ENCODE measurements at regions of chr1 and their contacts with region 1.

Region 1: DNA sequence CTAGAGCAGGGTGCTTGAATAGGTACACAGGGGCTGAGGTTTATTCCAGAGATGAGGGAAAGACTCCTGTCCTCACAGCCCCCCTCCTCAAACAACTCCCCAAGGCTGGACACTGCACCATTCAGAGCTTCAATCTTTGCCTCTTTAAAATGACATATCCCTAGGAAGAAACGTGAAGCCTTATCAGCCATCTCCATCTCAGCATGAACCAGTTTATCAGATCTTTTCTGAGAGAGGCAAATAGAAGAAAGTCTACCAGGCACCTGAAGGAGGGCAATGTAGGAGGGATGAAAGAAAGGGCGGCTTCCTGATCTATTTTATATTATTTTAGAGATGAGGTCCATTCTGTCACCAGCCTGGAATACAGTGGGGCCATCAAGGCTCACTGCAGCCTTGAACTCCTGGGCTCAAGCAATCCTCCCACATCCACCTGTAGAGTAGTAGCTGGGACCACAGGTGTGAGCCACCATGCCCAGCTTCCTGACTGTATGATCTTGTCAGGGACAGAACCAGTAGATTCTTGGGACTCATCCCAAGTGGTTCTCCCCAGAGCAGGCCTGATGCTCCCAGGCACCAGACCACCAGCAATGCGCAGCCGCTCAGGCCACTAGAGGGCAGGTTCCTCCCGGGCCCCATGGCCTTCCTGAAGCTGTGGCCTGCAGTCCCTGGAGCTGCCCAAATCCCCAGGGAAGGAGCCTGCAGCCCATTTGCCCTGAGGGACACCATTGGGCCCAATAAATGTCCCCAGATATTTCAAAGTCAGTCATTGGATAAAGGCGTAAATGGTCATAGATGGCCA is 44.4 kb upstream of the GOLT1A start:
- DNase-seq: peak; percentile 76 to 84
- H3K4me3 ChIP-seq: no peak overlapping the region
- H3K4me3 Mint-ChIP-seq: no peak overlapping the region
- H3K27ac Mint-ChIP-seq: no peak overlapping the region
- H3K4me1 ChIP-seq: peaks cover 8% of the 10 kb centered on the region; the same call in 1 of the 2 replicates
- H3K4me1 Mint-ChIP-seq: no peaks in the 10 kb centered on the region
- H3K27me3 ChIP-seq: no peaks in the 10 kb centered on the region
- H3K27me3 Mint-ChIP-seq: no peaks in the 10 kb centered on the region
- CTCF ChIP-seq: peak; percentile 86 to 92

Region 2: GRCh38 chr1:204274446-204274845 is 16.3 kb after region 1 on chr1:
- CTCF ChIA-PET with region 1: no interaction called
- POLR2A ChIA-PET with region 1: no interaction called
- intact Hi-C with region 1: no loop called
- DNase-seq: no peak
- H3K4me3 ChIP-seq: no peak overlapping the region
- H3K4me3 Mint-ChIP-seq: no peak overlapping the region
- H3K27ac Mint-ChIP-seq: no peak overlapping the region
- H3K4me1 ChIP-seq: no peaks in the 10 kb centered on the region
- H3K4me1 Mint-ChIP-seq: no peaks in the 10 kb centered on the region
- H3K27me3 ChIP-seq: no peaks in the 10 kb centered on the region
- H3K27me3 Mint-ChIP-seq: no peaks in the 10 kb centered on the region
- CTCF ChIP-seq: no peak

Region 3: DNA sequence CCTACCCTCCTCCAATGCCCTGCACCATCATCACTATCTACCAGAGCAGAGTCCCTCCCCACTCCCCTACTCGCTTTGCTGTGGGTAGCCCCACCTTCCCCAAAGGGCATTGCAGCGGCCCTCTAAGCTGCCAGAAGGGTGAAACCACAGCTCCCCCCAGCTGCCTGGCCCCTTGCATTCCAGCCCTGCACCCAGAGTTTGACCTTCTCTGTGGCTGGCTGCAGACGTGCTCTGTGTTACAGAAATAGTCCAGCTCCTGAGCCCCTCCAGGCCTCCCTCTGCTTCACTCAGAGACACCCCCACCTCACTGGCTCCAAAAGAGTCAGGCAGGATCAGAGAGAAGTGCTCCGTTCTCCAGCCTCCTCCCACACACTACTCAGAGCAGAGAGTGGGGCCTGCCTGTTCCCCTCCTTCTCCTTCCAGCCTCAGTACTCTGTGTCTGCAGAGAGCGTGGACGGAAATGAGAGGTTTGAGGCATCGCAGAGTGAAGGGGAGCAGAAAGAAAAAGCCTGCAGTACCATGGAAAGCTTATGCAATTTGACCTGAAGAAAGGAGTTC is 38.4 kb after region 1 on chr1:
- CTCF ChIA-PET with region 1: no interaction called
- POLR2A ChIA-PET with region 1: no interaction called
- intact Hi-C with region 1: loop called (anchors 1 kb)
- DNase-seq: no peak
- H3K4me3 ChIP-seq: no peak overlapping the region
- H3K4me3 Mint-ChIP-seq: no peak overlapping the region
- H3K27ac Mint-ChIP-seq: no peak overlapping the region
- H3K4me1 ChIP-seq: peaks cover 38% of the 10 kb centered on the region
- H3K4me1 Mint-ChIP-seq: peaks cover 22% of the 10 kb centered on the region
- H3K27me3 ChIP-seq: no peaks in the 10 kb centered on the region
- H3K27me3 Mint-ChIP-seq: no peaks in the 10 kb centered on the region
- CTCF ChIP-seq: peak in 1 of 2 experiments; percentile 12

Measured in Caco-2 (cell line).